Prostate gland (tissue), 2 donors: ENCODE measurements at regions of chr7 and their contacts with region 1.

Region 1: DNA sequence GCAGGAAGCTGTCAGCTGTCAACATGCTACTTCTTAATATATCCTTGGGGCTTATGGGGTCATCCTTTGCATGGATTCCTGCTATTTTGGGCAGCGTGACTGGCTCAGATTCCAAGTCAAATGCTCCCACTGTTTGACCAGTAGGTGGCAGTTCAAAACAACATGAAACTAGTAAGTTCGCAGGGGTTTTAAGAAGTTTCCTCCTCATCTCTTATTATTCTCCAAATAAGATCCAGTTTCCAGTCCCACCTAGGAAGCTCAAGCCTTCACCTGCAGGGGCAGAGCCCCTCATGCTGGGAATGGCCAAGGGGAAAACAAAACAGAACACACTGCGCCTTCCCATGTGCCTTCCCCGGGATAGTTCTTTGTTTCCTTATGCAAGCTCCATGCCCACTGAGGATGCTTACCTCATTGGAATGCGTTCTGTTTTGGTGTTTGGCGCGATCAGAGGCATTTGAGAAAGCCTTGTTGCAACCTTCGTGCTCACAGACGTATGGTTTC is 259.8 kb downstream of the GLI3 start:
- DNase-seq: no peak
- H3K4me3 ChIP-seq: no peak overlapping the region
- H3K27ac ChIP-seq: no peak overlapping the region
- H3K4me1 ChIP-seq: no peaks in the 10 kb centered on the region
- H3K27me3 ChIP-seq: peaks cover 2% of the 10 kb centered on the region
- CTCF ChIP-seq: peak; percentile 58 to 66 (median 62)
- POLR2A ChIP-seq: no peak

Region 2: DNA sequence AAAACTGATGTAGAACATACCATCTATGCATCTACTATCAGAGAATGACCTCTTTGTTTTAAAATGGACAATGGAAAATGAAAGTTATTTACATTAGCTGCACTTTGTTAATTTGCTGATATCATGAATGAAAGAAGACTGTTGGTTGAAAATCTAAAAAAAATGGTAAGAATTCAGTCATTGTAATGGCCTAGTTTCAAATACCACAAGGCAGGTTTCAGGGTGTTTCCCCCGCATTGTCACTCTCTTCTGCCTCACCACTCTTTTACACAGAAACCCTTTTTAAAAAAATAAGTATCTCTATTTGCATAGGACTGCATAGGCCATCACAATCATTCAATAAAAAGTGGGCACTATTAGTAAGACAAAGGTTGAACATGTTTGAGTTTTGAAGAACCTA is 1011.5 kb before region 1 on chr7:
- intact Hi-C with region 1: no loop called
- DNase-seq: no peak
- H3K4me3 ChIP-seq: no peak overlapping the region
- H3K27ac ChIP-seq: no peak overlapping the region
- H3K4me1 ChIP-seq: peaks cover 5% of the 10 kb centered on the region
- H3K27me3 ChIP-seq: no peaks in the 10 kb centered on the region
- CTCF ChIP-seq: no peak
- POLR2A ChIP-seq: no peak

Region 3: DNA sequence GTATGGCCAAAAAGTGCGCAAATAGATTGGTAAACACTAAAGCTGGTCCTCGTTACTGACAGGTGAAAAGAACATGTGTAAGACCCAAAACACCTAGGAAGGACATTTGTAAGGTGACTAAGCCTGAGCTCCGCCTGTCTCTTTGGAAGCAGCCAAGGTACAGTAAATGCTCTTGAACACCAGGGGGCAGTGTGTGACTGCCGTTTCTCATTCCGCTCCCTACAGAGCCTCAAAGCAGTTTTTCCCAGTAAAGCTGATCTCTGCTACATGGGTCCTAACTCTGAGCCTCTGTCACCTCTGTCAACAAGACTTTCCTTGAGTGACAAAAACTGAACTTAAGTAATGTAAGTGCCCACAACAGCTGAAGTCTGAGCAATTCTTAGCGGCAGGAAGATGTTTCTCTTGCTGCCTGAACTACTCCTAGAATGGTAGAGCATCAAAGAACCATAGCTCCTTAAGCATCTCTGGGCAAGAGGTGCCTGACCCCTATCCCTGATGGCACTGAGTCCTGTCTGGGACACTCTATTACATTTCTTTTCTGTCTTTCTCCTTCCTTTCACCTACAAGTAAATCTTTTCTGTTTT is 36.3 kb before region 1 on chr7:
- intact Hi-C with region 1: loop called (anchors 5 kb)
- DNase-seq: peak; percentile 72
- H3K4me3 ChIP-seq: no peak overlapping the region
- H3K27ac ChIP-seq: no peak overlapping the region
- H3K4me1 ChIP-seq: no peaks in the 10 kb centered on the region
- H3K27me3 ChIP-seq: no peaks in the 10 kb centered on the region
- CTCF ChIP-seq: peak; percentile 56 to 90 (median 84)
- POLR2A ChIP-seq: no peak

Region 4: DNA sequence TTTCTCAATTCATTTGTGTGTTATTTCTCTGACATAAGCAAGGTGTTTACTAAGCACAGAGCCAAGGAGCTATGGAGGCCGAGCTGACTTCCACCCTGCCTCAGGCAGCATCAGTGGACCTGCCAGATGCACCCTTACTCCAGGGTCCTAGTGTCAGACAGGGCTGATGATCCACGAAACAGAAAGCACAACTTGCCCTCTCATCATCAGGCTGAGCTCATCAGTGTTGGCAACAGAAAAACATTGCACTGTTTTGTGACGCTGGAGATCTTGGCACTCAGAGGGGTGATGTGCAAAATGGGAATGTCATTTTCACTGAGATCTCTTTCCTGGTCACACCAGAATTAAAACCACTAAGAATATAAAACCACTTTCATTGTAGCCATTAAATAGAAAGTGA is 58.0 kb after region 1 on chr7:
- intact Hi-C with region 1: no loop called
- DNase-seq: no peak
- H3K4me3 ChIP-seq: no peak overlapping the region
- H3K27ac ChIP-seq: no peak overlapping the region
- H3K4me1 ChIP-seq: no peaks in the 10 kb centered on the region
- H3K27me3 ChIP-seq: no peaks in the 10 kb centered on the region
- CTCF ChIP-seq: no peak
- POLR2A ChIP-seq: no peak

Region 5: GRCh38 chr7:42237162-42237821 is 260.1 kb after region 1 on chr7 and contains the start of gene GLI3:
- intact Hi-C with region 1: loop called (anchors 5 kb)
- DNase-seq: peak; percentile 84
- H3K4me3 ChIP-seq: peak within 1 kb of the TSS; percentile 66 to 70
- H3K27ac ChIP-seq: peak within 1 kb of the TSS; percentile 87
- H3K4me1 ChIP-seq: peaks cover 3% of the 10 kb centered on the region
- H3K27me3 ChIP-seq: no peaks in the 10 kb centered on the region
- CTCF ChIP-seq: peak in 2 of 4 experiments; percentile 28 to 29
- POLR2A ChIP-seq: peak; percentile 63
- total RNA-seq, gene GLI3: 9.2 to 14.7 TPM

Region 6: DNA sequence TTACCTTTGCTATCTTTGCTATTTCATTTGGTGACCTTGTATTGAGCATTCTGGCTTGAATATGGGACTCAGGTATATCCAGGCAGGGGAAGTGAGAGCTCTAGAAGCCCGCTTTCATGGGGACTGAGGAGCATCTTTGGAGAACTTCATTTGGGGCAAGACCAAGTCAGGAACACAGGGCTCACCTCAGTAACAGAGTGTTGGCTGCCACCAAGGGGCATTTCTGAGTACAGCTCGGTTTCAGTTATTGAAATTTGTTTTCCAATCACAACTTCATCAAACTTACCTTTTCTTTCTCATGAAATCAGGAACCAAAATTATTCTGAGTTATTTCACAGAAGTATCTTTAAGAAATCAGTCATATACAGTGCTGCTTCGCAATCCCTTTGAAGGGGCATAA is 597.5 kb after region 1 on chr7:
- intact Hi-C with region 1: loop called (anchors 10 kb)
- DNase-seq: no peak
- H3K4me3 ChIP-seq: no peak overlapping the region
- H3K27ac ChIP-seq: no peak overlapping the region
- H3K4me1 ChIP-seq: no peaks in the 10 kb centered on the region
- H3K27me3 ChIP-seq: no peaks in the 10 kb centered on the region
- CTCF ChIP-seq: peak in 2 of 4 experiments; percentile 9 to 35
- POLR2A ChIP-seq: no peak

Region 7: DNA sequence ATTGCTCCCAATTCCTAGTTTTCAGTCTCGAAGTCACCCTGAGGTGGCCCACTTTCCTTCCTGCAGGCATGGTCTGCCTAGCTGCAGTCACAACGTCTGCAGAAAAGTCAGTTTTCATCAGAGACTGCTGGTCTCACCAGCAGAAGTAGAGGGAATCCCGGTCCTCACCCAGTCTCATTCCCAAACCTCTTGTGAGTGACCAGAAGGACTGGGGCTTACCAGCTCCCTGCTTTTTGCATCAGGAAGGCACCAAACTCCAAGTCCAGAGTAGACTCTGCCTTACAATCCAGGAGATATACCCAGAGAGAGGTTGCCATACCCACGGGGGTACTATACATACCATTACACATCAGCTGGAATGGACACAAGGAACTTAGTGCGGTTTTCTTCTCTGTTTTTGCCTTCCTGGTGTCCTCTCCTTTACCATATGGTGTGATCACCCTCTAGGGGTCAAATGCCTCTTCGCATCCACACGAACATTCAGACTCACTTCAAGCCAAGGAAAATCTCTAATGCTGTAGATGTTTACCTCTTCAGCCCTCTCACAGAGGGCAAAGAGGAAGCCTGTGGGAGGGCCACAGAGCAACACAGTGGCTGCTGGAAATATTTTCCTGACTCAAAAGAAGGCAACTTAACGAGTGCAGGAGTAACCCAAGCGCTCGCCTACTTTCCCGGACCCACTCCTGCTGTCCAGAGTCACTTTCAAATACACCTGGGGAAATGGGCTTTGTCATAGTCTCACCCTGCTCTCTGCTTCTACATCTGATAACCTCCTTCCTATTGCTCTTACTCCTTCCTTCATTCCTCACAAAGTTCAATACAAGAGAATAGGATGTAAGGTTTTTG is 713.8 kb after region 1 on chr7:
- intact Hi-C with region 1: loop called (anchors 5 kb)
- DNase-seq: peak; percentile 21
- H3K4me3 ChIP-seq: no peak overlapping the region
- H3K27ac ChIP-seq: no peak overlapping the region
- H3K4me1 ChIP-seq: no peaks in the 10 kb centered on the region
- H3K27me3 ChIP-seq: no peaks in the 10 kb centered on the region
- CTCF ChIP-seq: peak in 3 of 4 experiments; percentile 32 to 62 (median 55)
- POLR2A ChIP-seq: no peak

Region 8: GRCh38 chr7:42831718-42832431 is 854.7 kb after region 1 on chr7:
- intact Hi-C with region 1: loop called (anchors 2 kb)
- DNase-seq: peak; percentile 53
- H3K4me3 ChIP-seq: no peak overlapping the region
- H3K27ac ChIP-seq: peak overlapping the region in 1 of 2 donors; percentile 16
- H3K4me1 ChIP-seq: peaks cover 14% of the 10 kb centered on the region
- H3K27me3 ChIP-seq: no peaks in the 10 kb centered on the region
- CTCF ChIP-seq: peak; percentile 30 to 72 (median 68)
- POLR2A ChIP-seq: no peak